Endothelial cell of umbilical vein (primary cell): ENCODE measurements at regions of chr7 and their contacts with region 1.

Region 1: GRCh38 chr7:76291343-76292212 is 10.9 kb upstream of the HSPB1 start:
- DNase-seq: peak; percentile 99
- H3K4me3 ChIP-seq: no peak overlapping the region
- H3K27ac ChIP-seq: peak overlapping the region; percentile 94
- H3K4me1 ChIP-seq: peaks cover 27% of the 10 kb centered on the region
- H3K27me3 ChIP-seq: no peaks in the 10 kb centered on the region
- CTCF ChIP-seq: peak; percentile 95 to 97
- POLR2A ChIP-seq: no peak

Region 2: GRCh38 chr7:76047811-76048667 is 243.5 kb before region 1 on chr7 and contains the starts of genes MDH2 and STYXL1:
- CTCF ChIA-PET with region 1: no interaction called
- POLR2A ChIA-PET with region 1: no interaction called
- dilution Hi-C with region 1: no loop called
- intact Hi-C with region 1: loop called (anchors 1 kb)
- DNase-seq: peak; percentile 97
- H3K4me3 ChIP-seq: peak within 1 kb of the TSS; percentile 79 to 98 (median 94)
- H3K27ac ChIP-seq: peak within 1 kb of the TSS; percentile 63
- H3K4me1 ChIP-seq: peaks cover 4% of the 10 kb centered on the region
- H3K27me3 ChIP-seq: no peaks in the 10 kb centered on the region
- CTCF ChIP-seq: no peak
- POLR2A ChIP-seq: peak; percentile 87
- total RNA-seq, gene MDH2: 168 and 175 TPM in 2 replicates
- total RNA-seq, gene STYXL1: 23.0 and 24.3 TPM in 2 replicates

Region 3: DNA sequence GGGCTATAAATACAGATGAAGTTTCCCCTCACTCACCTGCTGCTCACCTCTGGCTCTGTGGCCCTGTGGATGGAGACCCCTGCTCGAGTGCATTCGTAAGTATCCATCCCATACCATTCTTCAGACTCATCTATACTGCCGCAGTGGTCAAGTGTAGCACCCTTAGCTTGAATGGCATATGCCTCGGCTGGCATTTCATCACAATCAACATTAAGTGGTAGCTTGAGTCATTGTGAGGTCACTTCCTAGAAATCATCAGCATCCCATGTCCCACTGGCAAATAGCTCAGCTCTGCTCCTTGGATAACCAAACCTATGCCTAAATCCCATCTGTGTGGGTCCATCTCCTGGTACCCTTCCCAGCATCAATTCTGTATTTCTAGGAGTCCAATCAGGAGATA is 205.5 kb before region 1 on chr7:
- CTCF ChIA-PET with region 1: no interaction called
- POLR2A ChIA-PET with region 1: no interaction called
- dilution Hi-C with region 1: no loop called
- intact Hi-C with region 1: loop called (anchors 10 kb)
- DNase-seq: peak; percentile 49
- H3K4me3 ChIP-seq: no peak overlapping the region
- H3K27ac ChIP-seq: peak overlapping the region; percentile 55
- H3K4me1 ChIP-seq: peaks cover 20% of the 10 kb centered on the region
- H3K27me3 ChIP-seq: no peaks in the 10 kb centered on the region
- CTCF ChIP-seq: no peak
- POLR2A ChIP-seq: no peak

Region 4: GRCh38 chr7:76179686-76180085 is 111.9 kb before region 1 on chr7:
- CTCF ChIA-PET with region 1: interaction called, 32 read pairs
- POLR2A ChIA-PET with region 1: interaction called, 3 read pairs
- dilution Hi-C with region 1: no loop called
- intact Hi-C with region 1: loop called (anchors 1 kb)
- DNase-seq: no peak
- H3K4me3 ChIP-seq: no peak overlapping the region
- H3K27ac ChIP-seq: no peak overlapping the region
- H3K4me1 ChIP-seq: no peaks in the 10 kb centered on the region
- H3K27me3 ChIP-seq: no peaks in the 10 kb centered on the region
- CTCF ChIP-seq: no peak
- POLR2A ChIP-seq: no peak

Region 5: DNA sequence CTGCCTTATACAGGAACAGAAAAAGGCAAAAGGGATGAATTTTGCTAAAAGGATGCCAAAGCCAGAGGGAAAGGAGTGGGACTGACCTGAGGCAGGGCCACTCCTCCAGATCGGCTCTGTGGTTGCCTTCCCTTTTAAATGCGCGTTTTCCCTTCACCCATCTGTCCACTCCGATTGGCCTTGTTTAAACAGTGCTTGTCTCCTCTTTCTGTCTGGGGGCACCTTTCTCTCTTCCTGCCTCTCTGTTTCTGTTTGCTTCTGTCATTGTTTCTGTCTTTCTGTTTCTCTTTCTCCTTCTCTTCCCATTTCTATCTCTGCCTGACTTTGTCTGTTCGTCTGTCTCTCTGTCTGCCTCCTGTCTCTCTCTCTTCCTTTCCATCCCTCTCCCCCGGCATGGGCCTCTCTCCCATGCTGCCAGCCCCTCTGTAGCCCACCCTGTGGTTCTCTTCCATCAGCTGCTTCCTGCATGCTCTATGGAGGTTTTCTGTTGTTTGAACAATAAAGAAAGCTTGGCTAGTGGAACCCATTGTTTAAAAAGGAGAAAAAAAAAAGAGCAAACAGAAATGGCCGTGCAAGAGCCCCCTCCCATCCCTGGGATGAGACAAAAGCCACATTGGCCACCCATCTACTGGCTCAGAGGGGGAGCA is 18.6 kb before region 1 on chr7:
- CTCF ChIA-PET with region 1: interaction called, 10 read pairs
- POLR2A ChIA-PET with region 1: no interaction called
- dilution Hi-C with region 1: no loop called
- intact Hi-C with region 1: no loop called
- DNase-seq: no peak
- H3K4me3 ChIP-seq: no peak overlapping the region
- H3K27ac ChIP-seq: no peak overlapping the region
- H3K4me1 ChIP-seq: no peaks in the 10 kb centered on the region
- H3K27me3 ChIP-seq: peaks cover 28 to 41% of the 10 kb centered on the region in 2 experiments
- CTCF ChIP-seq: no peak
- POLR2A ChIP-seq: no peak

Region 6: DNA sequence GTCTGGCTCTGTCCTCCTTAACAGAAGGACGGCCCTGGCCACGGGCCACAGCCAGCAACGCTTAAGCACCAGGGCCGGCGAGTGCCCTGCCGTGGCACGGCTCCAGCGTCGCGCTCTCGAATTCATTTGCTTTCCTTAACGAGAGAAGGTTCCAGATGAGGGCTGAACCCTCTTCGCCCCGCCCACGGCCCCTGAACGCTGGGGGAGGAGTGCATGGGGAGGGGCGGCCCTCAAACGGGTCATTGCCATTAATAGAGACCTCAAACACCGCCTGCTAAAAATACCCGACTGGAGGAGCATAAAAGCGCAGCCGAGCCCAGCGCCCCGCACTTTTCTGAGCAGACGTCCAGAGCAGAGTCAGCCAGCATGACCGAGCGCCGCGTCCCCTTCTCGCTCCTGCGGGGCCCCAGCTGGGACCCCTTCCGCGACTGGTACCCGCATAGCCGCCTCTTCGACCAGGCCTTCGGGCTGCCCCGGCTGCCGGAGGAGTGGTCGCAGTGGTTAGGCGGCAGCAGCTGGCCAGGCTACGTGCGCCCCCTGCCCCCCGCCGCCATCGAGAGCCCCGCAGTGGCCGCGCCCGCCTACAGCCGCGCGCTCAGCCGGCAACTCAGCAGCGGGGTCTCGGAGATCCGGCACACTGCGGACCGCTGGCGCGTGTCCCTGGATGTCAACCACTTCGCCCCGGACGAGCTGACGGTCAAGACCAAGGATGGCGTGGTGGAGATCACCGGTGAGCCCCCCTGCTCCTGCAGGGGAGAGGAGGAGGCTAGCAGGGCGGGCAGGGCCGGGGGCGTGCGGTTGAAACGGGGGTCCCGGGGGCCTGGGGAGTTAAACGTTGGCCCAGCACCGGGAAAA is 11.0 kb after region 1 on chr7 and contains the start of gene HSPB1:
- CTCF ChIA-PET with region 1: interaction called, 132 read pairs
- POLR2A ChIA-PET with region 1: interaction called, 55 read pairs
- dilution Hi-C with region 1: no loop called
- intact Hi-C with region 1: loop called (anchors 1 kb)
- DNase-seq: peak; percentile 98
- H3K4me3 ChIP-seq: peak within 1 kb of the TSS; percentile 79 to 97 (median 84)
- H3K27ac ChIP-seq: peak within 1 kb of the TSS; percentile 73
- H3K4me1 ChIP-seq: peaks cover 19% of the 10 kb centered on the region
- H3K27me3 ChIP-seq: no peaks in the 10 kb centered on the region
- CTCF ChIP-seq: no peak
- POLR2A ChIP-seq: peak; percentile 99
- total RNA-seq, gene HSPB1: 1,711 and 1,748 TPM in 2 replicates

Region 7: DNA sequence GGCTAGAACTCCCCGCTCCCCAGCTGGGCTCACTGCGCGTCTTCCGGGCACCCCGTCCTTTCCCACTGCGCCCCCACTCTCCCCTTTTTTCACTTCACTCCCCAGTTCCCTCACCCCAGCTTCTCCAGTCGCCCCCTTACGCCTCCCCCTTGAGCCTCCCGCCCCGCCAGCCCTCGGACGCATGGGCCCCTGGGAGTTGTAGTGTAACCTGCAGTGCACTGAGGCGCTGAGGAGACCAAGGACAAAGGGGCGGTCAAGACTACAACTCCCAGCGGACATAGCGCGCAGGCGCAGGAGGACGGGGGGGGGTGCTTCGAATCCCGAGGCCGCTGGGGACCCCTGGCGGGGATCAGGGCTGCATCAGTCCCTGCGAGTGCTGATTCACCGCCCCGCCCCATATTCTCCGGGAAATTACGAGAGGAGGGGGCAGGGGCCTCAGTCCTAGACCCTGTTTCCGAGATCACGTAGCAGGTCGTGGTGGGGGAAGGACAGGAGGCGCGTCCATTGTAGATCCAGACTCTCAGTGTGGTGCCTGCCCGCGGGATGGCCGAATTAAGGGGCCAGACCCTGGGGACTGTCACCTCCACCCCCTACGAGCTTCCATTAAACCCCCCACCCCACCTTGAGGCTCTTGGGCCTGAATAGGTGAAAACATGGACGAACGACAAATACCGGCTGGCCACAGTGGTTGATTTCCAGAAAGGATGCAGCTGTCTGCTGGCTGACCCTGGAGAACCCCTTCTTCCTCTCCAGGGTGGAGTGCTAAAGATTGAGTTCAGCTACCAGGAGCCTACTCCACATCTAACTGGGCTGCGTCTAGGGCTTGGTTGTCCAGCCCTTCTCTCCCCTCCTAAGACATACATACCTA is 67.8 kb after region 1 on chr7:
- CTCF ChIA-PET with region 1: interaction called, 3 read pairs
- POLR2A ChIA-PET with region 1: interaction called, 6 read pairs
- dilution Hi-C with region 1: no loop called
- intact Hi-C with region 1: loop called (anchors 1 kb)
- DNase-seq: peak; percentile 98
- H3K4me3 ChIP-seq: peak overlapping the region; percentile 45 to 91 (median 49)
- H3K27ac ChIP-seq: peak overlapping the region; percentile 92
- H3K4me1 ChIP-seq: peaks cover 32% of the 10 kb centered on the region
- H3K27me3 ChIP-seq: no peaks in the 10 kb centered on the region
- CTCF ChIP-seq: peak; percentile 73 to 88
- POLR2A ChIP-seq: peak; percentile 51